ENCODE measurements at regions of chr2 and their contacts with region 1.

Region 1: DNA sequence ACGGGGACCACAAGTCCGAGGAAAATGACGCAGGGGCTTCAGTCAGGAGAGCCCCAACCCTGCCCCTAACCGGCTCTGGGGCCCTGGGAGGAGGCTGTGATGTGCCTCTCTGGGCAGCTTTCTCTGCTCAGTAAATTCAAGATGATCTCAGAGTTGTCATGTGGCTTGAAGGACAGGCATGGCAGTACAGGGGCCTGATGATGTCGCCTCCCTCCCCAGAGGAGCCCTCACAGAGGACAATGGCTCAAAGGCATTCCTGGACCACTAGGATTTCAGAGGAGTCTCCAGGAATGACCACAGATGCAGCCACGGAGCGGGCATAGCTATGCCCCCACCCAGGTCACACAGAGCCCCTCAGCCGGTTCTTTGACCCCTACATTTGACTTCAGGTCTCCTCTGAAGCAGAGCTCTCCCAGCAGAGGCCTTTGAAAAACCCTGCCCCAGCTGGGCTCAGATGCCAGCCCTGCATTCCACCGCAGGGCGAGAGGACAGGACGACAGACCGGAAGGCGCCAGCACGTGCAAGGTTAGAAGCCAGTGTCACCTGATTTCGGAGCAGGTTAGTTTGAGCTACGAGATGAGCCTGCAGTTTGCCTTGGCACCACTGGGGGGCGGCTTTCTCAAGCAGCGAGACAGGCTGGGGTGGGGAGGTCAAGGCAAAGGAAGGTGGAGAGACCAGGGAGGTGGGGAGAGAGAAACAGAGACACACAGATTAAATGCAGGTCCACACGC is 39.2 kb downstream of the BIN1 start:
- DNase-seq: peak; percentile 28 to 84 (median 62)
- ATAC-seq: peak; percentile 57 to 77 (median 61)
- H3K4me3 ChIP-seq: no peak overlapping the region
- H3K4me3 Mint-ChIP-seq: no peak overlapping the region
- H3K27ac ChIP-seq: peak overlapping the region; percentile 29
- H3K27ac Mint-ChIP-seq: peak overlapping the region in 1 of 2 donors; percentile 75
- H3K4me1 ChIP-seq: peaks cover 0 to 59% of the 10 kb centered on the region in 2 experiments
- H3K4me1 Mint-ChIP-seq: peaks cover 26 to 42% (median 38%) of the 10 kb centered on the region in 3 donors
- H3K27me3 ChIP-seq: no peaks in the 10 kb centered on the region
- H3K27me3 Mint-ChIP-seq: no peaks in the 10 kb centered on the region

Region 2: DNA sequence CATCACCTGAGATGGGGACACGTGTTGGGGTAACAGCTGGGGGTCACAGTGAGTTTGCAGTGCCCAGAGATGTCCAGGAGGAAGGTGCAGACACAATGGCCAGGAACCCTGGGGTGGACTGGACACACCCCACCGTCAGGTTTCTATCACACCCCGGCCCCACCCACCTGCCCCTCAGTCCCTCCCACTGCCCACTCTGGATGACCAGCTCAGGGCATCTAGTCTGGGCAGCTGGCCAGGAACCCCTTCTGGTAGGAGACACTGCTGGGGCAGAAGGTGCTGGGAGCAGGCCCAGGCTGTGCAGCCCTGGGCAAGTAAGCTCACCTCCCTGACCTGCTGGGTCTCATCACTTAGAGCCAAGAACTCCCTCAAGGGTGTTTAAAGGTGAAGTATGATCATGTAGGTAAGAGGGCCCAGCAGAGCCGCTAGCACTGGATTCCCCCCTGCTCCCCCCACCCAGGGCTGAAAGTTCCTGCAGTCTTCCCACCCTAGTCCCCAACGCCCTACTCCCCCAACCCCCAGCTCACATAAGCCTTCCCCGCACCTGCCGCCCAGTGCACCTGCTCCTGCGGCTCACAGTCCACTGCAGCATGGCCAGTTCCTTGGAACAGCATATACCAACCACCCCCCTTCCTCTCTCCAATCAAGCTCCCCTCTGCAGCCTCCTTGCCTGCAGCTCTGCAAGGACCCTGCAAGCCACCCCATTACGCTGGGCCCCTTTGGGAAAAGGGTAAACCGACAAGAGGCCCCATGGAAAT is 21.9 kb after region 1 on chr2:
- CTCF ChIA-PET with region 1: interaction called in 1 of 2 experiments, 13 read pairs
- POLR2A ChIA-PET with region 1: no interaction called
- DNase-seq: no peak
- ATAC-seq: no peak
- H3K4me3 ChIP-seq: no peak overlapping the region
- H3K4me3 Mint-ChIP-seq: no peak overlapping the region
- H3K27ac ChIP-seq: no peak overlapping the region
- H3K27ac Mint-ChIP-seq: no peak overlapping the region
- H3K4me1 ChIP-seq: peaks cover 15 to 46% of the 10 kb centered on the region in 2 experiments
- H3K4me1 Mint-ChIP-seq: peaks cover 18 to 42% (median 20%) of the 10 kb centered on the region in 3 donors
- H3K27me3 ChIP-seq: peaks cover 0 to 15% of the 10 kb centered on the region in 2 experiments
- H3K27me3 Mint-ChIP-seq: peaks cover 0 to 4% of the 10 kb centered on the region in 2 donors

Region 3: DNA sequence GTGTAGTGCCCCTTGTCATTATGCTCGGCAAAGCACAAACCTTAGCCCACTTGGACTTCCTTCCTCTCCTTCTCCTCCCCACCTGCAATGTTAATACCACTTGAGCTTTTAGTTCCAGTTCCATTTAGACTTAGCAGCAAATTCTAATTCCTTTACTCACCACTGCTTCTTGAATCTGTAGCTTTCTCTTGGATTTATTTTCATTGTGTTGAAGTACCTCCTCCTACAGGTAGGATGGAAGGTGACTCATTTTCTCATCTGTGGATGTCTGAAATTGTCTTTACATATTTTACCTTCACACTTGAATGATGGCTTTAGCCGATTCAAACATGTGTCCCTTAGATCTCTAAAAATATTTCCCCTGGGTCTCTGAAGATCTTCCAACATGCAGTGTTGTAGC is 72.0 kb after region 1 on chr2:
- CTCF ChIA-PET with region 1: interaction called, 5 to 10 read pairs
- POLR2A ChIA-PET with region 1: no interaction called
- DNase-seq: peak in 1 of 35 experiments; percentile 8
- ATAC-seq: no peak
- H3K4me3 ChIP-seq: no peak overlapping the region
- H3K4me3 Mint-ChIP-seq: no peak overlapping the region
- H3K27ac ChIP-seq: no peak overlapping the region
- H3K27ac Mint-ChIP-seq: no peak overlapping the region
- H3K4me1 ChIP-seq: no peaks in the 10 kb centered on the region
- H3K4me1 Mint-ChIP-seq: no peaks in the 10 kb centered on the region
- H3K27me3 ChIP-seq: peaks cover 0 to 12% of the 10 kb centered on the region in 2 experiments
- H3K27me3 Mint-ChIP-seq: peaks cover 0 to 4% of the 10 kb centered on the region in 2 donors

Measured in T-cell (primary cell).